HCT116 (cell line): ENCODE measurements at regions of chr2 and their contacts with region 1.

Region 1: DNA sequence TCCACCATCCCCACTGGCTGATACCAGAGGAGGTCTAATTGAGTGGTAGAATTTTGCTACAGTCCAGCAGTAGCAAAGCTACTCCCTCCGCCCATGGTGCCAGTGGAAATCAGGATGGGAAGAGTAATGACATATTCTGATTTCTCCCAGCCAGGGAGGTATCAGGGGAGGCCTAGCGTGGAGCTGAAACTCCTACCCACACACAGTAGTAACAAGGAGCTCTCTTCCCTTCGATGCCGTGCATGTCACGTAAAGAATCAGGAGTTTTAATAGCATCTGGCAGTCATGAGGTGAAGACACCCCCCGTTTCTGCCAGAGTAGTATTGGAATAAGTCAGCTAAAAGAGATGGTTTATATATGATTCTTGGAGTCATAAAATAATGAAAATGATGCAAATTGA is 786.8 kb upstream of the DDX18 start:
- DNase-seq: no peak
- ATAC-seq: no peak
- H3K4me3 ChIP-seq: no peak overlapping the region
- H3K27ac ChIP-seq: no peak overlapping the region
- H3K4me1 ChIP-seq: no peaks in the 10 kb centered on the region
- H3K27me3 ChIP-seq: no peaks in the 10 kb centered on the region
- CTCF ChIP-seq: no peak
- POLR2A ChIP-seq: no peak
- RAD21 ChIP-seq: no peak

Region 2: GRCh38 chr2:116874021-116874420 is 153.6 kb before region 1 on chr2:
- CTCF ChIA-PET with region 1: no interaction called
- POLR2A ChIA-PET with region 1: no interaction called
- RAD21 ChIA-PET with region 1: no interaction called
- intact Hi-C with region 1: no loop called
- DNase-seq: no peak
- ATAC-seq: no peak
- H3K4me3 ChIP-seq: no peak overlapping the region
- H3K27ac ChIP-seq: no peak overlapping the region
- H3K4me1 ChIP-seq: no peaks in the 10 kb centered on the region
- H3K27me3 ChIP-seq: no peaks in the 10 kb centered on the region
- CTCF ChIP-seq: no peak
- POLR2A ChIP-seq: no peak
- RAD21 ChIP-seq: no peak

Region 3: GRCh38 chr2:116917196-116917595 is 110.5 kb before region 1 on chr2:
- CTCF ChIA-PET with region 1: no interaction called
- POLR2A ChIA-PET with region 1: no interaction called
- RAD21 ChIA-PET with region 1: no interaction called
- intact Hi-C with region 1: no loop called
- DNase-seq: no peak
- ATAC-seq: no peak
- H3K4me3 ChIP-seq: no peak overlapping the region
- H3K27ac ChIP-seq: no peak overlapping the region
- H3K4me1 ChIP-seq: no peaks in the 10 kb centered on the region
- H3K27me3 ChIP-seq: no peaks in the 10 kb centered on the region
- CTCF ChIP-seq: no peak
- POLR2A ChIP-seq: no peak
- RAD21 ChIP-seq: no peak

Region 4: DNA sequence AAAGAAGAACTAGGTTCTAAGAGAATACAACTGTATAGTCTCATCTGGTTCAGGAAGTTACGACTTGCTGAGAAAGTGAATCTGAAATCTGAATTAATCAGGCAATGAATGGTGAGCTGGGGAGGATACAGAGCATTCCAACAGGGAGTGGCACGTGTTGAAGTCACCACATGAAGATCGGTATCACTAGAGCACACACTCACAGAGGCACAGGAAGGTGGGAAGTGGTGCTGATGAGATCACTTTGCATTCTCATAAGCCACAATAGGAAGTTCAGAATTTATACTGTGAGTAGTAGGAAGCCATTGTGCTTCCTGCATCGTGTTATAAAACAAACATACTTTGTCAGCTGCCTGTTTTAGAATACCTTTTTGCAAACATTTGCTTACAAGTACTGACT is 171.9 kb after region 1 on chr2:
- CTCF ChIA-PET with region 1: no interaction called
- POLR2A ChIA-PET with region 1: no interaction called
- RAD21 ChIA-PET with region 1: no interaction called
- intact Hi-C with region 1: loop called (anchors 10 kb)
- DNase-seq: no peak
- ATAC-seq: no peak
- H3K4me3 ChIP-seq: no peak overlapping the region
- H3K27ac ChIP-seq: no peak overlapping the region
- H3K4me1 ChIP-seq: no peaks in the 10 kb centered on the region
- H3K27me3 ChIP-seq: no peaks in the 10 kb centered on the region
- CTCF ChIP-seq: no peak
- POLR2A ChIP-seq: no peak
- RAD21 ChIP-seq: no peak